ENCODE measurements at regions of chr4 and their contacts with region 1.

Region 1: GRCh38 chr4:168710353-168710946 is 213.6 kb downstream of the PALLD start:
- DNase-seq: no peak
- ATAC-seq: peak; percentile 58 to 89 (median 69)
- H3K4me3 ChIP-seq: no peak overlapping the region
- H3K27ac ChIP-seq: peak overlapping the region; percentile 38
- H3K4me1 ChIP-seq: peaks cover 18% of the 10 kb centered on the region
- H3K27me3 ChIP-seq: no peaks in the 10 kb centered on the region
- CTCF ChIP-seq: peak; percentile 71

Region 2: GRCh38 chr4:167956676-167957075 is 753.8 kb before region 1 on chr4:
- intact Hi-C with region 1: no loop called
- DNase-seq: no peak
- ATAC-seq: no peak
- H3K4me3 ChIP-seq: no peak overlapping the region
- H3K27ac ChIP-seq: no peak overlapping the region
- H3K4me1 ChIP-seq: no peaks in the 10 kb centered on the region
- H3K27me3 ChIP-seq: no peaks in the 10 kb centered on the region
- CTCF ChIP-seq: no peak

Region 3: DNA sequence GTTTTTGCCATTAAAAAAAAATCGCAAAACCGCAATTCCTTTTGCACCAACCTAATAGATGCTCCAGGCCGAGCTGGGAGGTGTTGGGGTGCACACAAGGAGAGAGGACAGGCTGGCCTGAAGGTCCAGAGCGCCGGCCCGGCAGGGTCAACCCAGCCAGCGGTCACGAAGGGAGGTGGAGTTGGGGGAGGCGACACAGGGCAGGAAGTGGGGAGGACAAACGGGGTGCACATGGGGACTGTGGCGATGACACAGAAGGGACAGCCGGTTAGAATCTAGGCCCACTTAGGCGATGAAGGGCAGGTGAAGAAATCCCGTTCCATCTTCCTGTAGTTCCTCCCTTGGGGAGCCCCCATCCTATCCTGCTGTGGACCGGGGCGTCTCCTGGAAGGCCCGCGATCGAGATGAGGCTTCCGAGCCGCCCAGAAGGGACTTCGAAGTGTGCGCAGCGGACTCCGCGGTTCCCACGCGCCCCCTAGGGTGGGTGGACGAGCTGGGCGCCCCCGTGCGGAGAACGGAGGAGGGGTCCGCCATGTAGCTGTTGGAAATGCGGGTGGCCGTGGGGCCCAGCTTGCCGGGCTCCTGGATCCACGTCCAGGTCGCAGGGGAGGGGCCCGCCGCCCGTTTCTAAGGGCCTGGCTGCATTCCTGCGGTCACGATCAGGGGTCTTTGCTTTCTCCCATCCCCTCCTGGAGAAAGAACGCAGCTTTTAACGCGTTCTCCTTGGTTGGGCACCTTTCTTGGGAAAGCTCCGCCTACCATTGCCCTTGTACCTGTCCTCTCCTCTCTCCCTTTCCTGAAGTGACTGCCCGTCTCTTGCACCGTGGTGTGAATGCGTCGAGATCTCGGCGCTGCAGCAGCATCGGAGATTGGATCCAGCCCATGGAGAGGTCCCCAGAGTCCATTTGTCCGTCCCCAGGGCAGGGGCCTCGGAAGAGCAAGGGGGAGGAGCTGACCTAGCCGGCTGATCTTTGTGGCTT is 1064.3 kb after region 1 on chr4:
- intact Hi-C with region 1: loop called in 1 of 2 experiments (anchors 5 kb)
- DNase-seq: peak in 1 of 2 donors; percentile 49
- ATAC-seq: no peak
- H3K4me3 ChIP-seq: peak overlapping the region; percentile 38
- H3K27ac ChIP-seq: no peak overlapping the region
- H3K4me1 ChIP-seq: peaks cover 4% of the 10 kb centered on the region
- H3K27me3 ChIP-seq: peaks cover 0 to 22% (median 13%) of the 10 kb centered on the region in 3 donors
- CTCF ChIP-seq: no peak